ENCODE measurements at regions of chr4 and their contacts with region 1.

Region 1: DNA sequence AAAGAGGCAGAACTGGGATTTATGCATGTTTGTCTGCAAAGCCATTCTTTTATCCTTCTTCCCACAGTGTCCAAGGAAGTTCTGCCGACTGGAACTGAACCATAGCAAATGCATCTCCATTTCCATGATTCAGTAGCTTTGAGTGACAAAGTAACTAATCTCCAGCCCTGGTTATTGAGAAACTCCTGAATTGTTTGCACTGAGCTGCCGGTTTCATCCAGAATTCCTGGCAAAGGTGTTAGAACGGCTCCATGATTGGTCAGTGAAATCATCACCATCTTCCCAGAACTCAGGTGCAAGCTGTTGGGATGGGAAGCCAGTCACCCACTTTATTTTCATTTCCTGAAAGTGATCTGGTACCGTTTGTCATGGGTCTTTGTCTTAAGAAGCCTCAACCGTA is 47.0 kb upstream of the SLC34A2 start:
- DNase-seq: no peak
- H3K4me3 ChIP-seq: no peak overlapping the region
- H3K27ac ChIP-seq: no peak overlapping the region
- H3K4me1 ChIP-seq: no peaks in the 10 kb centered on the region
- H3K27me3 ChIP-seq: no peaks in the 10 kb centered on the region
- CTCF ChIP-seq: no peak

Region 2: GRCh38 chr4:25477221-25477620 is 131.4 kb before region 1 on chr4:
- CTCF ChIA-PET with region 1: no interaction called
- POLR2A ChIA-PET with region 1: no interaction called
- intact Hi-C with region 1: no loop called
- DNase-seq: no peak
- H3K4me3 ChIP-seq: no peak overlapping the region
- H3K27ac ChIP-seq: no peak overlapping the region
- H3K4me1 ChIP-seq: no peaks in the 10 kb centered on the region
- H3K27me3 ChIP-seq: no peaks in the 10 kb centered on the region
- CTCF ChIP-seq: no peak

Region 3: DNA sequence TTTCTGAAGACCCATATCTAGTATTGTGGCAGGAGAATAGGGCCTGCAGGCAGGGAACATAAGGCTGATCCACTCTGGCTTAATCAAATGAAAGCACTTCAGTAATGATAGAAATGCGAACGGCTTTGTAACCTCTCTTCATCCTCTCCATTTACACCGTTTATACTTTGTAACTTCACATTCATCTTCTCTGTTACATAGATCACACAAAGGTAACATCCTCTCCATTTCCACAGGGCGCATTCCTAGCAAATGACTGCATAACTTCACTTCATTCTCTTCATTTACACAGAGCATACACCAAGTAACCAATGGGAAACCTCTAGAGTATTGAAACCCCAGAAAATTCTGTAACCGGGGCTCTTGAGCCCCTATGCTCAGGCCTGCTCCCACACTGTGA is 18.5 kb before region 1 on chr4:
- CTCF ChIA-PET with region 1: no interaction called
- POLR2A ChIA-PET with region 1: interaction called, 16 read pairs
- intact Hi-C with region 1: no loop called
- DNase-seq: no peak
- H3K4me3 ChIP-seq: no peak overlapping the region
- H3K27ac ChIP-seq: no peak overlapping the region
- H3K4me1 ChIP-seq: no peaks in the 10 kb centered on the region
- H3K27me3 ChIP-seq: no peaks in the 10 kb centered on the region
- CTCF ChIP-seq: no peak

Measured in PC-9 (cell line).